ENCODE measurements at regions of chr1 and their contacts with region 1.

Region 1: DNA sequence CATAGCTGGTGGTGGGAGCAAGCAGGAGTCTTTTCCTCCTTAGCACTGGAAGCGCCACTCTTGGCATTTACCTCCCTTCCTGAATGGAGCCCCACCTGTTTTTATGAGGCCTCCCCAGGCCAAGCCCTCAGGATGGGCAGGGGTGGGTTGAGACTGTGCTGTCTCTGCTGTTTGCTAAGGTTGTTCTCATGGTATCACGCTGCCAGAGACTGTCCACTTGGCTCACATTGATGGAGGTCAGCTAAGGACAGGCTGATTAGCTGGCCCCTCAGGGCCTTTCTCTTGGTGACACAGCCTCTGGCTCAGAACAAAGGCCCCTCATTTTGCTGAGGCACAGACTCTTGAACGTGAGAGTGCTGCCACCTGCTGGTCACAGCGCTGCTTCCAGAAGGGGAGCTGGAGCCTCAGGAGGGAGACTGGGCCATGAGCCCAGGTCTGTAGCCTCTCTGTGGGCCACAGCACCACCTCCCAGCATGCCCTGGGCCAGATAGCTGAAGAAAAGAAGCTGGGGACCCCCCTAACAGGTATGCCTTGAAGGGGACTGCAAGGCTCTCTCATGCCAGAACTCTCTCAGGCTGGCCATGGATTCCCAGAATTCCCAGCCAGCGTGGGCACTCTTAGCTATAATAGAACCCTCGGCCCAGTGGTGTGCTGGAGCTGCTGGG is 85.6 kb downstream of the CD58 start:
- DNase-seq: peak; percentile 86
- H3K4me3 ChIP-seq: no peak overlapping the region
- H3K27ac ChIP-seq: peak overlapping the region; percentile 37 to 65
- H3K4me1 ChIP-seq: no peaks in the 10 kb centered on the region
- H3K27me3 ChIP-seq: no peaks in the 10 kb centered on the region
- CTCF ChIP-seq: peak; percentile 93 to 98 (median 96)
- POLR2A ChIP-seq: no peak

Region 2: DNA sequence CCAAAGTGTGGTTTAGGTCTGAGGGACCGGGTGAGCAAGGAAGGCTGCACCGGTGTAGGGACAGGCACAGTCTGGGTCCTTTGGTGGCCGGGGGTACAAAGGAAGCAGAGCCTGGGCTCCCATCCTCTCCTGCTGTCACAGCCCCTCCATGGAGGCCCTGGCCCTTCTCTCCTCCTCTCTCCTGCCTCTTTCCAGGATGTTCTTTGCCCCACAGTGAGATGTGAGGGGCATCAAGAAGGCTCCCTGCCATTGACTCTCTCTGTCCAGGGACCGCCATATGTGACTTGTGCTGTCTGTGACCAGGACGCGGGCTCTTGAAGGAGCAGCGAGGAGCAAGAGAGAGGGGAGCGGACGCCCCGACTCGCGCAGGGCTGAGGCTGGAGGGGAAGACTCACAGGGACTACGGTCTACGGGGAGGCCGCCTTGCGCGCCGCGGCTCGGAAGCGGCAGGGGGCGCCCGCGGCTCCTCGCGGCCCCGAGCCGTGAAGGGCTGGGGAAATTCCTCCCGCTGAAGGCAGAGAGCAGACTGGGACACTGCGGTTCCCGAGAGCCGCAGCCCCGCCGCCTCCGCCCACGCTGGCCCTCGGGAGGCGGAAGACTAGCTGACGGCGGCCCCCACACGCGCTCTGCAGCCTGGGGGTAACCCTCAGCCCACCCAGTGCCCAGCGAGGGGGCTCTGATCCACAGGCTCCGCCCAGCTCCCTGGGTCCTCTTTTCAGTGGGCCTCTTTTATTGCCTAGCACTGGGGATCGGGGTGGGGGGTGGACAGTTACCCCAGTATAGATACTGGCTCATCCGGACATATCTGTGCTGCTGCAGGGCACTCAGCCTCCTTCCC is 333.2 kb before region 1 on chr1:
- intact Hi-C with region 1: loop called (anchors 1 kb)
- DNase-seq: peak; percentile 71
- H3K4me3 ChIP-seq: peak overlapping the region; percentile 29 to 37
- H3K27ac ChIP-seq: peak overlapping the region; percentile 55 to 60
- H3K4me1 ChIP-seq: no peaks in the 10 kb centered on the region
- H3K27me3 ChIP-seq: no peaks in the 10 kb centered on the region
- CTCF ChIP-seq: peak; percentile 90 to 97 (median 94)
- POLR2A ChIP-seq: peak; percentile 7

Region 3: DNA sequence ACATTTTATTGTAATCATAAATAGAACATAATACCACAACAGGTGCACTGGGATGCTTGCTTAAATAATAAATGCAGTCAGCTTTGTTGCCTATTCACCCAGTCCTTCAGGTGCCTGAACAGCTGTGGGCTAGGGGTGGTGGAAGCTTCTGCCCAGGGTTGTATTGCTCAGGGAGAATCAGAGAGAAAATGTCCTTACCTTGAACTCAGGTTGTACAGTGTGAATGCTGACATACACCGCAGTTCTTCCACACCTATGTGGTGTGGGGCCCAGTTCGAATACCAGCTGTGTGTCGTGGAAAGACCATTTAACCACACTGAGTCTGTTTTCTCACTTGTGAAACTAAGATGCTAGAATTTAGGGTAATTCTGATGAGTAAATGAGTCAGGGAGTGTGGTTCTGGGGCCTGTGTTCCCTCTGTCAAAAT is 227.8 kb before region 1 on chr1:
- intact Hi-C with region 1: no loop called
- DNase-seq: no peak
- H3K4me3 ChIP-seq: no peak overlapping the region
- H3K27ac ChIP-seq: no peak overlapping the region
- H3K4me1 ChIP-seq: no peaks in the 10 kb centered on the region
- H3K27me3 ChIP-seq: no peaks in the 10 kb centered on the region
- CTCF ChIP-seq: no peak
- POLR2A ChIP-seq: no peak

Region 4: DNA sequence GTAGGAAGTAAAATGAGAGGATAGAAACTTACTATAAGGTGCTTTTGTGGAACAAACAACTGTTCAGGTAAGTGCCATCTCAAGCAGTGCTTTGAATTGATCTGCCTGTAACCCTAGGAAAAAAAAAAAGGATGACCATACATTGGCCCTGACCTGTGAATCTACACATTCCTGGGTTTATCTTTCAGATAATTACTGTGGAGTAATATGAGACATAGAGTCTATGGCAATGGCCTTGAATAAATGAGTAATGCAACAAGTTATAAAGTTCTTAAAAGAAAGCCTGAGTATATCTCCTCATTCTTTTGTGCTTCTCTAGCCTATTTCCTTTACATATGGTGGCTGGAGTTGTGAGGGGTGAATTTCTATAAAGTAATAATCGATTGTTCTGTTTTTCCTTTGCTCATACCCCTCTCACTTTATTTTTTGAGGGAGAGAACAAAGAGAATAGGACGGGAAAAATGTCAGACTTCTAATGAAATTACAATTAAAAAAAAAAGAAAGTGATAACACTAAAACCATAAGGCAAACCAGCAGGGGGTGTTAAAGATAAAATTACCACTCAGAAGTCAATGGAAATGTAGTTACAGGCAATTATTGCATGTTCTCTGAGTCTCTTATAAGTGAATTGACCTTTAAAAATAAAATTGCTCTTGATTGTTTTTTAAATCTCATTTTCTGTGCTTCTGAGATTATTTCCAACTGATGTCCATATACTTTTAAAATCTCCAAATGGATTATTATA is 124.6 kb before region 1 on chr1:
- intact Hi-C with region 1: loop called (anchors 2 kb)
- DNase-seq: no peak
- H3K4me3 ChIP-seq: no peak overlapping the region
- H3K27ac ChIP-seq: no peak overlapping the region
- H3K4me1 ChIP-seq: no peaks in the 10 kb centered on the region
- H3K27me3 ChIP-seq: no peaks in the 10 kb centered on the region
- CTCF ChIP-seq: peak in 2 of 4 experiments; percentile 36 to 53
- POLR2A ChIP-seq: no peak

Region 5: GRCh38 chr1:116418091-116418830 is 66.9 kb before region 1 on chr1:
- intact Hi-C with region 1: loop called (anchors 5 kb)
- DNase-seq: peak; percentile 76
- H3K4me3 ChIP-seq: peak overlapping the region; percentile 64 to 78
- H3K27ac ChIP-seq: peak overlapping the region; percentile 58 to 77
- H3K4me1 ChIP-seq: no peaks in the 10 kb centered on the region
- H3K27me3 ChIP-seq: no peaks in the 10 kb centered on the region
- CTCF ChIP-seq: peak in 3 of 4 experiments; percentile 12 to 21 (median 14)
- POLR2A ChIP-seq: peak; percentile 36

Region 6: DNA sequence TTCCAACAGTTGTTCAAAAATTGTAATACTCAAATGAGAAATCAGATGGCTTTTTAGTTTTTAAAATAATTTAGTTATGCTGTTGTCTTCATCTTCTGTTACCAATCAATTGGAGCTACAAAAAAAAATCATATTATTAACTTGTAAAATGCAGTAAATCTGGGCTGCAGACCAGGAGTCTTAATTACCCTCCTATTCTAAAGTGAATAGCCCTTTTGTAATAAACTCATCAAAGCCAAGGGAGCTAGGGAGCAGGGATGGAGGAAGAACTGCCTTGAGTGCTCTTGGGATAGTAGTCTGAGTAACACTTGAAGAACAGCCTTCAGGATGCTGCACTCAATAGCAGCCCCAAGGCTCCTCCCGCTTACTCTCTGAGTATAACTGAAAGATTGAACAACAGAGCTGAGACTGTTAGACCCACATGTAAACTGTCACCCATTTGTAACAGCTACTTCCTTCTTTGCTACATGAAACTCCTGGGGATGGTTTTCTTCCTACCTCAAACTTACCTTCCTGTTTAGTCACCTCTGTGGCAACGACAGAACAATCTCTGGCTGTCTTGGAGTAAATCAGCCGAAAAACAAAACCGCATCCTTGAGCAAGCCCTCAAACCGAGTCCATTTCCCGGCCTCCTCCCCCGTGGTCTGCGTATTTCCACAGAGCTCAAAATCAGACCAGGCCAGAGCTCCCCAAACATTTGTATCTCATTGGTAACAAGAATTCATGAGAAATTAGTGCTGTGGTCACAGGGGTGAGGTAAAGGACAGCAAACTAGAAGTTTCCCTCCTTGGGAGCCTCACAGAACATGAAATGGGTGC is 29.7 kb after region 1 on chr1:
- intact Hi-C with region 1: no loop called
- DNase-seq: no peak
- H3K4me3 ChIP-seq: no peak overlapping the region
- H3K27ac ChIP-seq: no peak overlapping the region
- H3K4me1 ChIP-seq: no peaks in the 10 kb centered on the region
- H3K27me3 ChIP-seq: no peaks in the 10 kb centered on the region
- CTCF ChIP-seq: no peak
- POLR2A ChIP-seq: no peak

Region 7: GRCh38 chr1:116740746-116741145 is 255.5 kb after region 1 on chr1:
- intact Hi-C with region 1: no loop called
- DNase-seq: no peak
- H3K4me3 ChIP-seq: no peak overlapping the region
- H3K27ac ChIP-seq: no peak overlapping the region
- H3K4me1 ChIP-seq: no peaks in the 10 kb centered on the region
- H3K27me3 ChIP-seq: no peaks in the 10 kb centered on the region
- CTCF ChIP-seq: no peak
- POLR2A ChIP-seq: no peak

Measured in prostate gland (tissue), 2 donors.